HCT116 (cell line): ENCODE measurements at regions of chr15 and their contacts with region 1.

Region 1: GRCh38 chr15:57732526-57733331 is 26.2 kb downstream of the POLR2M start:
- DNase-seq: peak; percentile 48
- ATAC-seq: peak; percentile 91
- H3K4me3 ChIP-seq: no peak overlapping the region
- H3K27ac ChIP-seq: no peak overlapping the region
- H3K4me1 ChIP-seq: peaks cover 4% of the 10 kb centered on the region in 2 experiments; a peak in 3 of 4 replicates
- H3K27me3 ChIP-seq: no peaks in the 10 kb centered on the region
- CTCF ChIP-seq: peak; percentile 47 to 97 (median 89); a peak in 5 of 6 replicates
- POLR2A ChIP-seq: no peak
- RAD21 ChIP-seq: peak; percentile 46; the same call in 1 of the 2 replicates

Region 2: DNA sequence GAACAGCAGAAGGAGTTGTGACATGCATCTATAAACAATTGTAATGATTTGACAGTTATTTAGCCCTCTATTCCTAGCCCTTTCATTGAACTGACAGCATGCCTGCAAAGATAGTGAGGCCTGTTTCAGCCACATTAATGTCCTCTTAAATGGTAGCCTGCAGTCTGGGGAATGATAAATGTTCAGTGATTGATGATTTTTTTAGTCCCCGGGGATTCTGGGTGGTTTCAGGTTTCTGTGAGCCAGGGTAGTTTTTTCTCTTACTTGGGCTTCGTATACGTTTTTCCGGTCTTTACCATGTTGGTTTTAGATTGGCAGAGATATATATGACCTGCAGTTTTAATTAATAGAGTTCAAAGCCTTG is 642.3 kb before region 1 on chr15:
- CTCF ChIA-PET with region 1: no interaction called
- POLR2A ChIA-PET with region 1: no interaction called
- RAD21 ChIA-PET with region 1: no interaction called
- intact Hi-C with region 1: no loop called
- DNase-seq: no peak
- ATAC-seq: no peak
- H3K4me3 ChIP-seq: no peak overlapping the region
- H3K27ac ChIP-seq: no peak overlapping the region
- H3K4me1 ChIP-seq: no peaks in the 10 kb centered on the region
- H3K27me3 ChIP-seq: no peaks in the 10 kb centered on the region
- CTCF ChIP-seq: no peak
- POLR2A ChIP-seq: no peak
- RAD21 ChIP-seq: no peak

Region 3: GRCh38 chr15:57273402-57273801 is 459.3 kb before region 1 on chr15:
- CTCF ChIA-PET with region 1: no interaction called
- POLR2A ChIA-PET with region 1: no interaction called
- RAD21 ChIA-PET with region 1: no interaction called
- intact Hi-C with region 1: no loop called
- DNase-seq: no peak
- ATAC-seq: no peak
- H3K4me3 ChIP-seq: no peak overlapping the region
- H3K27ac ChIP-seq: no peak overlapping the region
- H3K4me1 ChIP-seq: no peaks in the 10 kb centered on the region
- H3K27me3 ChIP-seq: no peaks in the 10 kb centered on the region
- CTCF ChIP-seq: no peak
- POLR2A ChIP-seq: no peak
- RAD21 ChIP-seq: no peak

Region 4: DNA sequence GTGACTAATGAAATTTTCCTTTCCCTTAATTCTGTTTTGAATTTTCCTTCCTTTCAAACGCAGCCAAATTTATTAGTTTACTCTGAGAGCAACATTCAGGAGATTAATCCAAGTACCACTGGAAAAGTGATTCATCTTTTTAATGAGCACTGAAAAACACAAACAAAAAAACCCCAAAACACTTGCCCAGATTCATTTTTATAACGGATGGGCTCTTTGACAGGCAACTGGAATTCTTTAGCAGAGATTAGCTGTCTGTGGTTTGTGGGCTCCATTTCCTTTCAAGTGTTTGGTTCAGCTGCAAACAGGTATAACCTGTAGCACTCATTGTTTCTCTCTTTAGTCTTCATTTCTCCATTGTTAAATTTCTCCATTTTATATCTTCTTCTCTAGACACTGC is 29.3 kb before region 1 on chr15:
- CTCF ChIA-PET with region 1: no interaction called
- POLR2A ChIA-PET with region 1: no interaction called
- RAD21 ChIA-PET with region 1: no interaction called
- intact Hi-C with region 1: no loop called
- DNase-seq: no peak
- ATAC-seq: no peak
- H3K4me3 ChIP-seq: no peak overlapping the region
- H3K27ac ChIP-seq: no peak overlapping the region
- H3K4me1 ChIP-seq: peaks cover 5 to 16% of the 10 kb centered on the region in 2 experiments; a peak in 3 of 4 replicates
- H3K27me3 ChIP-seq: no peaks in the 10 kb centered on the region
- CTCF ChIP-seq: no peak
- POLR2A ChIP-seq: no peak
- RAD21 ChIP-seq: no peak

Region 5: GRCh38 chr15:57720867-57721266 is 11.9 kb before region 1 on chr15:
- CTCF ChIA-PET with region 1: interaction called, 12 read pairs
- POLR2A ChIA-PET with region 1: no interaction called
- RAD21 ChIA-PET with region 1: no interaction called
- intact Hi-C with region 1: no loop called
- DNase-seq: no peak
- ATAC-seq: no peak
- H3K4me3 ChIP-seq: no peak overlapping the region
- H3K27ac ChIP-seq: no peak overlapping the region
- H3K4me1 ChIP-seq: no peaks in the 10 kb centered on the region
- H3K27me3 ChIP-seq: no peaks in the 10 kb centered on the region
- CTCF ChIP-seq: no peak
- POLR2A ChIP-seq: no peak
- RAD21 ChIP-seq: no peak

Region 6: DNA sequence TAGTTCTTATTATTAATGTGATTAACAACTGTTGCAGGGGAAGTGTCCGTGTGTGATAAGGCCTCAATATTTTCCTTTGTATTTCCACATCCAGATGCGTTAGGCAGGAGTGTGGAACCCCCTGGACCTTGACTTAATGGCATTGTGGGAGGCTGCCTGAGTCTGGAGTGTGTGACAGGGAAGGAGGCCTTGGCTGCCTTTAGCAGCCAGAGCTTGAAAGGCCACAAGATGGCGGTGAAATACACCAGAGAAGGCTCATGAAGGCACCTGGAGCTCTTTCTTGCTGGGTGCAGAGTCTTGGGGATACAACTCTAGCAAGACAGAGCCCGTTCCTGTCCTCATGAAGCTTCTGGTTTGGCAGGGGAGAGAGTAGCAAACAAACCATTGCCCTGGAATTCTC is 10.7 kb after region 1 on chr15:
- CTCF ChIA-PET with region 1: interaction called, 18 read pairs
- POLR2A ChIA-PET with region 1: interaction called, 3 read pairs
- RAD21 ChIA-PET with region 1: no interaction called
- intact Hi-C with region 1: no loop called
- DNase-seq: no peak
- ATAC-seq: peak; percentile 59; the same call in 1 of the 2 replicates
- H3K4me3 ChIP-seq: no peak overlapping the region
- H3K27ac ChIP-seq: no peak overlapping the region
- H3K4me1 ChIP-seq: no peaks in the 10 kb centered on the region
- H3K27me3 ChIP-seq: no peaks in the 10 kb centered on the region
- CTCF ChIP-seq: peak; percentile 12 to 21 (median 20); a peak in 2 of 6 replicates
- POLR2A ChIP-seq: no peak
- RAD21 ChIP-seq: peak; percentile 49

Region 7: GRCh38 chr15:57751177-57751800 is 18.6 kb after region 1 on chr15:
- CTCF ChIA-PET with region 1: interaction called, 16 read pairs
- POLR2A ChIA-PET with region 1: no interaction called
- RAD21 ChIA-PET with region 1: no interaction called
- intact Hi-C with region 1: no loop called
- DNase-seq: no peak
- ATAC-seq: peak; percentile 63
- H3K4me3 ChIP-seq: no peak overlapping the region
- H3K27ac ChIP-seq: no peak overlapping the region
- H3K4me1 ChIP-seq: no peaks in the 10 kb centered on the region
- H3K27me3 ChIP-seq: no peaks in the 10 kb centered on the region
- CTCF ChIP-seq: peak; percentile 51 to 62 (median 60); a peak in 5 of 6 replicates
- POLR2A ChIP-seq: no peak
- RAD21 ChIP-seq: peak; percentile 71